Breast epithelium (tissue), 4 donors: ENCODE measurements at regions of chr9 and their contacts with region 1.

Region 1: GRCh38 chr9:34346873-34347799 is 17.8 kb downstream of the NUDT2 start:
- DNase-seq: no peak
- H3K4me3 ChIP-seq: no peak overlapping the region
- H3K27ac ChIP-seq: no peak overlapping the region
- H3K4me1 ChIP-seq: no peaks in the 10 kb centered on the region
- H3K27me3 ChIP-seq: no peaks in the 10 kb centered on the region
- CTCF ChIP-seq: no peak
- POLR2A ChIP-seq: no peak

Region 2: GRCh38 chr9:34318163-34318790 is 28.9 kb before region 1 on chr9:
- intact Hi-C with region 1: loop called (anchors 2 kb)
- DNase-seq: no peak
- H3K4me3 ChIP-seq: no peak overlapping the region
- H3K27ac ChIP-seq: no peak overlapping the region
- H3K4me1 ChIP-seq: no peaks in the 10 kb centered on the region
- H3K27me3 ChIP-seq: no peaks in the 10 kb centered on the region
- CTCF ChIP-seq: no peak
- POLR2A ChIP-seq: no peak